Endothelial cell of umbilical vein (primary cell): ENCODE measurements at regions of chr1 and their contacts with region 1.

Region 1: GRCh38 chr1:52296345-52296744 is 69.7 kb downstream of the CC2D1B start:
- DNase-seq: peak; percentile 78
- H3K4me3 ChIP-seq: no peak overlapping the region
- H3K27ac ChIP-seq: no peak overlapping the region
- H3K4me1 ChIP-seq: no peaks in the 10 kb centered on the region
- H3K27me3 ChIP-seq: no peaks in the 10 kb centered on the region
- CTCF ChIP-seq: peak; percentile 60 to 65
- POLR2A ChIP-seq: no peak

Region 2: DNA sequence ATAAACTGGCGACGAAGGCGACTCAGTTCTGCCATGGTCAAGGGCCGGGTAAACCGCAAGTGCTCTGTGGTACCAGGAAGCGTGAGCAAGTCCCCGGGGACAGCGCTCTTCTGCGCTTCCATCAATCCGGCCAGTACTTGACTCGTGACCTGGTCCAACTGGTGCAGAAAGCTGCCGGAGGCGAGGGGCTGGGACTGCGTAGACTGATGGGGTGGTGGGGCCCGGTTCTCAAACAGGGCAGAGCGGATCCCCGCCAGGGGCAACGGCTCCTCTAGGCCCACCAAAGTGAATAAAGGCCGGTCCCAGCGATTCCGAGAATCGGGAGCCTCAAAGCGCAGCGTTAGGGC is 263.6 kb before region 1 on chr1:
- CTCF ChIA-PET with region 1: no interaction called
- POLR2A ChIA-PET with region 1: no interaction called
- dilution Hi-C with region 1: no loop called
- intact Hi-C with region 1: no loop called
- DNase-seq: peak; percentile 57
- H3K4me3 ChIP-seq: peak overlapping the region; percentile 58 to 87 (median 79)
- H3K27ac ChIP-seq: peak overlapping the region; percentile 70
- H3K4me1 ChIP-seq: peaks cover 21% of the 10 kb centered on the region
- H3K27me3 ChIP-seq: no peaks in the 10 kb centered on the region
- CTCF ChIP-seq: no peak
- POLR2A ChIP-seq: no peak

Region 3: DNA sequence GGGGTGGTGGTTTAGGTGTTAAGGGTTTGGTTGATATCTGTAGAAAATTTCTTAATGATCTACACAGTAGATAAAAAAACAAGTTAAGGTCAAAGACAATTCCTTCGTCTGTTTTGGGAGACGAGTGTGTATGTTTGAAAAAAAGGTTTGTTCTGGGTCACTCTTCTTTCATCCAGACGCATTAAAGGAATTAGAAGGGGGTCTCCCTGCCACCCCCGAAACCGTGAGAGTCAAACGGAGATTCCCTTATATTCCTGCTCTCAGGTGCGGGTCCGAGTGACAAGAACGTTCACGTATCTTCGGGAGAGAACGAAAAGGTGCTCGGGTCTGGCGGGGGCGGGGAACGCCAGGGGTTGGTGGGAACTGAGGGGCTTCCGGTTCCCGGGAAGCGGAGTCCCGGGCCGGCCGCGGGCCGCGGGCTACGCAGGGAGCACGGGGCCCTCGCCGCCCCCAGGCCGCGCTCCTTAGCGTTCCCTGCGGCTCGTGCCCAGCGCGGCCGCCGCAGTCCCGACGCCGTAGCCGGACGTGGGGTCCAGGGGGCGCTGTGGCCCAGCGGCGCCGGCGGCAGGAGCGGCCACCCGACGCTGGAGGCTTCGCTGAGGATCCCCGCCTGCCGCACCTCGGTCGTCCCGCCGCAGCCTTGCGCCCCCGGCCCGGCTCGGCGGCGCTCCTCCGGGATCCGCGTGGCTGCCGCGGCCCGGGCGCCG is 154.7 kb before region 1 on chr1 and contains the start of gene ZFYVE9:
- CTCF ChIA-PET with region 1: interaction called, 14 read pairs
- POLR2A ChIA-PET with region 1: no interaction called
- dilution Hi-C with region 1: no loop called
- intact Hi-C with region 1: loop called (anchors 1 kb)
- DNase-seq: peak; percentile 79
- H3K4me3 ChIP-seq: peak within 1 kb of the TSS; percentile 29 to 83 (median 48)
- H3K27ac ChIP-seq: peak within 1 kb of the TSS; percentile 79
- H3K4me1 ChIP-seq: peaks cover 33% of the 10 kb centered on the region
- H3K27me3 ChIP-seq: no peaks in the 10 kb centered on the region
- CTCF ChIP-seq: peak; percentile 65 to 71
- POLR2A ChIP-seq: peak; percentile 45
- total RNA-seq, gene ZFYVE9: 14.8 and 16.8 TPM in 2 replicates

Region 4: GRCh38 chr1:52651904-52652303 is 355.6 kb after region 1 on chr1:
- CTCF ChIA-PET with region 1: no interaction called
- POLR2A ChIA-PET with region 1: no interaction called
- dilution Hi-C with region 1: no loop called
- intact Hi-C with region 1: no loop called
- DNase-seq: no peak
- H3K4me3 ChIP-seq: no peak overlapping the region
- H3K27ac ChIP-seq: no peak overlapping the region
- H3K4me1 ChIP-seq: no peaks in the 10 kb centered on the region
- H3K27me3 ChIP-seq: peaks cover 0 to 1% of the 10 kb centered on the region in 2 experiments
- CTCF ChIP-seq: no peak
- POLR2A ChIP-seq: no peak